ENCODE measurements at regions of chr1 and their contacts with region 1.

Region 1: GRCh38 chr1:226083302-226084101 is 21.0 kb downstream of the H3-3A start:
- DNase-seq: peak; percentile 88 to 95
- H3K4me3 ChIP-seq: peak overlapping the region; percentile 74
- H3K4me3 Mint-ChIP-seq: peak overlapping the region; percentile 90
- H3K27ac Mint-ChIP-seq: peak overlapping the region; percentile 60
- H3K4me1 ChIP-seq: no peaks in the 10 kb centered on the region
- H3K4me1 Mint-ChIP-seq: no peaks in the 10 kb centered on the region
- H3K27me3 ChIP-seq: no peaks in the 10 kb centered on the region
- H3K27me3 Mint-ChIP-seq: no peaks in the 10 kb centered on the region
- CTCF ChIP-seq: no peak

Region 2: GRCh38 chr1:226046240-226046639 is 37.3 kb before region 1 on chr1:
- CTCF ChIA-PET with region 1: no interaction called
- POLR2A ChIA-PET with region 1: no interaction called
- intact Hi-C with region 1: no loop called
- DNase-seq: no peak
- H3K4me3 ChIP-seq: no peak overlapping the region
- H3K4me3 Mint-ChIP-seq: no peak overlapping the region
- H3K27ac Mint-ChIP-seq: no peak overlapping the region
- H3K4me1 ChIP-seq: no peaks in the 10 kb centered on the region
- H3K4me1 Mint-ChIP-seq: no peaks in the 10 kb centered on the region
- H3K27me3 ChIP-seq: no peaks in the 10 kb centered on the region; the same call in 1 of the 2 replicates
- H3K27me3 Mint-ChIP-seq: peaks cover 5% of the 10 kb centered on the region
- CTCF ChIP-seq: no peak

Region 3: DNA sequence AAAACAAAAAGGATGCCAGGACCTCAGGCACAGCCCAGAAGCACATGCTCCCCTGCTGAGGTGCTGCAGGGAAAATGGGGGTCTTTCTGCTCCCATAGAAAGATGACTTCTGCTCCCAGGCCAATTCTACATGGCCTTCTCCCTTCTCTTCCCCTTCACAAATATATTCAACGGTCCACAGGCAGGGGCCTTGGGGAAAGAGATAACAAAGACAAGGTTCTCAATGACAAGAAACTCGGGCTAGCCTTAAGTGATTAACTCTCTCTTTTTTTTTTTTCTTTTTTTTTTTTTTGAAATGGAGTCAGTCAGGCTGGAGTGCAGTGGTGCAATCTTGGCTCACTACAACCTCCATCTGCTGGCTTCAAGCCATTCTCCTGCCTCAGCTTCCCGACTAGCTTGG is 33.2 kb after region 1 on chr1:
- CTCF ChIA-PET with region 1: no interaction called
- POLR2A ChIA-PET with region 1: no interaction called
- intact Hi-C with region 1: loop called (anchors 1 kb)
- DNase-seq: no peak
- H3K4me3 ChIP-seq: no peak overlapping the region
- H3K4me3 Mint-ChIP-seq: no peak overlapping the region
- H3K27ac Mint-ChIP-seq: no peak overlapping the region
- H3K4me1 ChIP-seq: peaks cover 15% of the 10 kb centered on the region
- H3K4me1 Mint-ChIP-seq: peaks cover 5% of the 10 kb centered on the region
- H3K27me3 ChIP-seq: no peaks in the 10 kb centered on the region
- H3K27me3 Mint-ChIP-seq: no peaks in the 10 kb centered on the region
- CTCF ChIP-seq: no peak

Region 4: DNA sequence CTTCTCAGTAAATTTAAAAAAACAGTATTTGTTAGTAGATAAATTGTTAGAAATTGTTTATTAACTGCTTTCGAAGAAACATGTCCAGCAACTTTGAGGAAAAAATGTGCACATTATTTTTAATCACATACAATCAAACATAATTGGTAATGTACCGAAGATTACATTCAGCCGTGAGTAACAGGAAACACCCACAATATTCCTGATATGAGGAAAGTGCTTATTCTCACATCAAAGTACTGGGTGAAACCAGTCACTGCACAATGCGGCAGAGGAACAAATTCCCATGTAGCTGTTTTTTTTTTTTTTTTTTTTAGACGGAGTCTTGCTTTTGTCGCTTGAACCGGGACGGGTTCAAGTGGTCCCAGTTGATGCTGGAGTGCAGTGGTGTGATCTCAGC is 93.4 kb after region 1 on chr1:
- CTCF ChIA-PET with region 1: no interaction called
- POLR2A ChIA-PET with region 1: interaction called, 11 read pairs
- intact Hi-C with region 1: no loop called
- DNase-seq: no peak
- H3K4me3 ChIP-seq: no peak overlapping the region
- H3K4me3 Mint-ChIP-seq: no peak overlapping the region
- H3K27ac Mint-ChIP-seq: no peak overlapping the region
- H3K4me1 ChIP-seq: no peaks in the 10 kb centered on the region
- H3K4me1 Mint-ChIP-seq: peaks cover under 1% of the 10 kb centered on the region
- H3K27me3 ChIP-seq: no peaks in the 10 kb centered on the region
- H3K27me3 Mint-ChIP-seq: no peaks in the 10 kb centered on the region
- CTCF ChIP-seq: no peak

Region 5: GRCh38 chr1:226268421-226269116 is 185.1 kb after region 1 on chr1:
- CTCF ChIA-PET with region 1: no interaction called
- POLR2A ChIA-PET with region 1: no interaction called
- intact Hi-C with region 1: no loop called
- DNase-seq: no peak
- H3K4me3 ChIP-seq: no peak overlapping the region
- H3K4me3 Mint-ChIP-seq: no peak overlapping the region
- H3K27ac Mint-ChIP-seq: no peak overlapping the region
- H3K4me1 ChIP-seq: no peaks in the 10 kb centered on the region
- H3K4me1 Mint-ChIP-seq: peaks cover 13% of the 10 kb centered on the region
- H3K27me3 ChIP-seq: no peaks in the 10 kb centered on the region
- H3K27me3 Mint-ChIP-seq: no peaks in the 10 kb centered on the region
- CTCF ChIP-seq: no peak

Measured in Caco-2 (cell line).